GM10248 (cell line): ENCODE measurements at regions of chr5 and their contacts with region 1.

Region 1: DNA sequence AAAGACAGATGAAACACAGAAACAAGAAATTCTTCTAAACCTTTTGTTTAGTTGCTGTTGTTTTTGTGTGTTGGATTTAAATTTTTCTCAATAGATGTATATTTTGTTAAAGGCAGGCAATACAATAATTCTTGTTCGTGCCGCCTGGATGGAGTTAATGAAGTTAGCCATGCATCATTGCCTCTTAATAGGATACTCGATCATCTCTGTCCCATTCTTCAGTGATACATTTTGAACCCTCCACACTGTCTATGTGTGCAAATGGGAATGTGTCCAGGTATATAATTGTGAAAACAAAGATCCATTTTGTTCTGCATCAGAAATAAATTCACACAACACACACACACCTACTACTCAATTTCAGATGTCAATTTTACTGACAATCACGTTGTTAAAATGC is 186.6 kb upstream of the ADAMTS16 start:
- DNase-seq: no peak
- CTCF ChIP-seq: no peak

Region 2: GRCh38 chr5:4941957-4942830 is 11.4 kb before region 1 on chr5:
- CTCF ChIA-PET with region 1: interaction called, 16 read pairs
- POLR2A ChIA-PET with region 1: no interaction called
- DNase-seq: peak; percentile 44
- CTCF ChIP-seq: peak; percentile 86